Activated CD4-positive, alpha-beta T cell treated with anti-CD3 and anti-CD28 coated beads for 36 hours (primary cell): ENCODE measurements at regions of chr1 and their contacts with region 1.

Region 1: GRCh38 chr1:202713110-202713509 is 2.9 kb upstream of the SYT2 start:
- DNase-seq: no peak
- ATAC-seq: no peak
- H3K4me3 Mint-ChIP-seq: no peak overlapping the region
- H3K27ac Mint-ChIP-seq: no peak overlapping the region
- H3K4me1 Mint-ChIP-seq: no peaks in the 10 kb centered on the region
- H3K27me3 Mint-ChIP-seq: peaks cover 39% of the 10 kb centered on the region

Region 2: DNA sequence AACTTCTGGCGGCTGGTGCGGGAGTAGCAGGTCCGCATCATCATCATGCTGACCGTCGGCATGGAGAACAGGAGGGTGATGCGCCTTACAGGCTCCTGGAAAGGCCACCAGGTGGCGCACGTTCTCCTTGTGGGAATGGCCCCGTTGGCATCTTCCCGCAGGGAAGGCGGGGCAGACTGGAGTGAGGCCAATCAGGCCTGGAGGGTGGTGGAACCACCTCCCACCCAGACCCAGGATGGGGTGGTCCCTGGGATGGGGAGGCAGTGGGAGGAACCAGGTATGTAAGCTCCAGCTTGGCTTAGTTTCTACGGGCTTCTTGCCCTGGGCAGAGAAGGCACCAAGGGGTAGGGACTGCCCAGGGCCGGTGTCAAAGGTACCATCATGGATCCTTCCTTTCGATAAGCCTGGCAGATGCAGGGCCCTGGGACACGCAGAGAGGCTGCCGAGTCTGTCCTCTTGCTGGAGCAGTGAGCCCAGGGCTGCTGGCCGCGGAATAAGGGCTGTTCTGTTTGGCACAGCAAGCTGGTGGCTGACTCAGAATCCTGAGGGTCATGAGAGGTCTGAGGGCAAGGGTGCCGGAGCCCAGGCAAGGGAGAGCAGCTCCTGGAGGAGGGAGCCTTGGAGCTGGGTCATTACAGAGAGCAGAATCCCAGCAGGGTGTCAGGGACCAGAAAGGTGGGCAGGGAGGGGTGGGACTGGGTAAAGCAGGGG is 528.2 kb before region 1 on chr1:
- CTCF ChIA-PET with region 1: interaction called, 3 read pairs
- POLR2A ChIA-PET with region 1: no interaction called
- intact Hi-C with region 1: loop called (anchors 2 to 5 kb)
- DNase-seq: peak; percentile 85
- ATAC-seq: peak; percentile 79
- H3K4me3 Mint-ChIP-seq: no peak overlapping the region
- H3K27ac Mint-ChIP-seq: no peak overlapping the region
- H3K4me1 Mint-ChIP-seq: peaks cover 12% of the 10 kb centered on the region
- H3K27me3 Mint-ChIP-seq: peaks cover 2% of the 10 kb centered on the region

Region 3: GRCh38 chr1:202274611-202275010 is 438.5 kb before region 1 on chr1:
- CTCF ChIA-PET with region 1: no interaction called
- POLR2A ChIA-PET with region 1: no interaction called
- intact Hi-C with region 1: loop called in 1 of 2 experiments (anchors 5 kb)
- DNase-seq: peak; percentile 74
- ATAC-seq: peak; percentile 61
- H3K4me3 Mint-ChIP-seq: no peak overlapping the region
- H3K27ac Mint-ChIP-seq: no peak overlapping the region
- H3K4me1 Mint-ChIP-seq: no peaks in the 10 kb centered on the region
- H3K27me3 Mint-ChIP-seq: peaks cover 2% of the 10 kb centered on the region

Region 4: DNA sequence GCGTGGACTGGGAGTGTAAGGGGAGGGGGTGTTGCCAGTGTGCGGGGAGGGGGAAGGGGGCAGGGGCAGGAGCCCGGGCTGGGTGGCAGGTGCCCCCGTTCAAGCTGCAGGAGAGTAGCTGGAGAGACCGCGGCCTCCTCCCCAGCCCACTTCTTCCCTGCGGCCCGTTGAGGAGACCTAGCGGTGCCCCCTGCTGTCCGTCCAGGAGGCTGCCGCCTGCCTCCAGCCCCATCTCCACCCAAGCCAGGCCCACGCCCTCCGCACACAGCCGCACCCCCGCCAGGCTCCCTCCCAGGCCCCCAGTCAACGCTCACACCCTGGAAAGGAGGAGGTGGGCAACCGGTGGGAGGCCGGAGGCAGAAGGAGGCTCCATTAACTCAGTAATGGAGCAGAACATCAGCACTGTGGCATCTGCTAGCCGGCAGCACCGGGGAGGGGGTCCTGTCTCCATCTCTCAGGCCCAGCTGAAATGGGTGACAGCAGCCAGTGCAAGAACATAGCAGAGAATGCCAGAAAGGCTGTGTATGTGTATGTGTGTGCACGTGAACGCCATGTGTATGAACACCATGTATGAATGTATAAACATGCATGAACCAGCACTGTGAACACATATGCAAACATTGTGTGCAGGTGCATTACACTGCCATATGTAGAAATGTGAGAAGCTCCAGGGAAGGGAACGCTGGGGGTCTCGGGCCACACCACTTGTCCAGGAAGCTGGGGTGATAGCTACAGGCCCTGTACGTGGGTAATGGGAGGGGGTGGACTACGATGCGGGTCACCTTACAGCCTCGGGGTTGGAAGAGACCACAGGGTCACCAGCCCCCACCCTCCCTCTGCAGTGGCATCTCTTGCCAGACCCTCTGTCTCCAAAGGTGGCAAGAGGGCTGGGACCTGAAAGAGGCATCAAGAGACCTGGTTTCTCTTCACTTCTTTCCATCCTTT is 87.4 kb before region 1 on chr1:
- CTCF ChIA-PET with region 1: no interaction called
- POLR2A ChIA-PET with region 1: no interaction called
- intact Hi-C with region 1: loop called in 1 of 2 experiments (anchors 2 kb)
- DNase-seq: peak; percentile 82
- ATAC-seq: peak; percentile 82
- H3K4me3 Mint-ChIP-seq: no peak overlapping the region
- H3K27ac Mint-ChIP-seq: no peak overlapping the region
- H3K4me1 Mint-ChIP-seq: peaks cover 27% of the 10 kb centered on the region
- H3K27me3 Mint-ChIP-seq: peaks cover 5% of the 10 kb centered on the region

Region 5: DNA sequence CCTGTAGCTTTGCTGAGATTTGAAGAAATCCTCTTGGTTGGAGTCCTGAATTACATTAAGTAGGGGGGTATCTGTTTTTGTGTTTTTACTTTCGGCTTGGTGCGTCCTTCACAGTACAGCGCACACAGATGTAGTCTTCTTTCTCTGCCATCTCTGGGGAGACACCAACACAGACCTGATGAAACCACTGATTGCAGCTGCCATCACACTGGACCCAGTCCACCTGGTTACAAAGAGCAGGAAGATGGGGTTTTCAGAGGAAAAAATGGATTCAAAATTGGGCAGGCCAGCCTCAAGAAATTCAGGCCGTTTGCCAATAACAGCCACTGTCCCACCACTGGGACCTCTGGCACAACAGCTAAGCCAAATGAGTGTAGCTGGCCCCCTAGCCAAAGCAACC is 15.8 kb after region 1 on chr1:
- CTCF ChIA-PET with region 1: interaction called, 11 read pairs
- POLR2A ChIA-PET with region 1: no interaction called
- intact Hi-C with region 1: no loop called
- DNase-seq: no peak
- ATAC-seq: no peak
- H3K4me3 Mint-ChIP-seq: no peak overlapping the region
- H3K27ac Mint-ChIP-seq: no peak overlapping the region
- H3K4me1 Mint-ChIP-seq: no peaks in the 10 kb centered on the region
- H3K27me3 Mint-ChIP-seq: no peaks in the 10 kb centered on the region

Region 6: GRCh38 chr1:202750758-202751157 is 37.6 kb after region 1 on chr1:
- CTCF ChIA-PET with region 1: no interaction called
- POLR2A ChIA-PET with region 1: no interaction called
- intact Hi-C with region 1: no loop called
- DNase-seq: no peak
- ATAC-seq: no peak
- H3K4me3 Mint-ChIP-seq: no peak overlapping the region
- H3K27ac Mint-ChIP-seq: no peak overlapping the region
- H3K4me1 Mint-ChIP-seq: no peaks in the 10 kb centered on the region
- H3K27me3 Mint-ChIP-seq: no peaks in the 10 kb centered on the region

Region 7: GRCh38 chr1:202781180-202781579 is 68.1 kb after region 1 on chr1:
- CTCF ChIA-PET with region 1: no interaction called
- POLR2A ChIA-PET with region 1: no interaction called
- intact Hi-C with region 1: no loop called
- DNase-seq: no peak
- ATAC-seq: no peak
- H3K4me3 Mint-ChIP-seq: no peak overlapping the region
- H3K27ac Mint-ChIP-seq: no peak overlapping the region
- H3K4me1 Mint-ChIP-seq: peaks cover 18% of the 10 kb centered on the region
- H3K27me3 Mint-ChIP-seq: no peaks in the 10 kb centered on the region

Region 8: DNA sequence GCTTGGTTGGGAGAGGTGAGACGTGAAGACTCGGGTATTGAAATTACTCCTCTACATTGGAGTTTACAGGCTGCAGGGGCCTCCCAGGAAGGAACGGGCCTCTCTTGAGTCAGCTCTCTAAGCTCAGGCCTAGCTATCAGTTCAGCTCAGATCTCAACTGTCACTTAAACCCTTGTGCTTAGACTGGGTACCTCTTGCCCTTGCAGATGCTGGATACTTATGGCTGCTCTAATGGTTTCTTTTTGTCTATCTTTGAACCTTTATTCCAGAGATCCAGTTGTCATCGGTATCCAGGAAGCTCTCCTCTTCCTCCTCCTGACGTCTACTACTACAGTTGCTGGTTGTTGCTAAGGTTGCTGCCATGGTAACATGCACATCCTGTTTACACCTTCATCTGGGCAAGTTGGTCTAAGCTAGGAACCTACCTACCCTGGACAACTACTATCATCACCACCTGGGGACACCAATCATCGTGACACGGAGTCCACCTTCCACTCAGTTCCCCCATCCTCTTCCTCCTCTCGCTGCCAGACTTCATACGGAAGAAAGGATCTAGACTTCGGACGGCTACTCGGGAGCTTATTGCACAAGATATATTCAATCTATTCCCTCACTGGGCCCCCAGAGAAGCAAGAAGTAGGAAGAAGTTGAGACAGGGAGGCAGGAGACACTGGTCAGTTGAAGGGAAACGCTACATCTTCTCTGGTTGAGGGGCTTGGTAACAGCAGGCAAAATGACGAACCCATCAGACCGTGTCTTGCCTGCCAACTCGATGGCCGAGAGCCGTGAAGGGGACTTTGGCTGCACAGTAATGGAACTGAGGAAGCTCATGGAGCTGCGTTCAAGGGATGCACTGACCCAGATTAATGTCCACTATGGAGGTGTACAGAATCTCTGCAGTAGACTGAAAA is 969.6 kb after region 1 on chr1:
- CTCF ChIA-PET with region 1: no interaction called
- POLR2A ChIA-PET with region 1: no interaction called
- intact Hi-C with region 1: no loop called
- DNase-seq: peak; percentile 73
- ATAC-seq: peak; percentile 92
- H3K4me3 Mint-ChIP-seq: peak overlapping the region; percentile 32
- H3K27ac Mint-ChIP-seq: peak overlapping the region; percentile 80
- H3K4me1 Mint-ChIP-seq: peaks cover 37% of the 10 kb centered on the region
- H3K27me3 Mint-ChIP-seq: no peaks in the 10 kb centered on the region